BJ (cell line): ENCODE measurements at regions of chr10 and their contacts with region 1.

Region 1: GRCh38 chr10:101467286-101467770 is 113.4 kb downstream of the BTRC start:
- DNase-seq: peak; percentile 26
- H3K4me3 ChIP-seq: no peak overlapping the region
- H3K27me3 ChIP-seq: no peaks in the 10 kb centered on the region
- CTCF ChIP-seq: peak; percentile 90

Region 2: GRCh38 chr10:100229819-100230422 is 1237.4 kb before region 1 on chr10:
- CTCF ChIA-PET with region 1: no interaction called
- POLR2A ChIA-PET with region 1: no interaction called
- DNase-seq: no peak
- H3K4me3 ChIP-seq: peak overlapping the region; percentile 80
- H3K27me3 ChIP-seq: no peaks in the 10 kb centered on the region
- CTCF ChIP-seq: no peak

Region 3: DNA sequence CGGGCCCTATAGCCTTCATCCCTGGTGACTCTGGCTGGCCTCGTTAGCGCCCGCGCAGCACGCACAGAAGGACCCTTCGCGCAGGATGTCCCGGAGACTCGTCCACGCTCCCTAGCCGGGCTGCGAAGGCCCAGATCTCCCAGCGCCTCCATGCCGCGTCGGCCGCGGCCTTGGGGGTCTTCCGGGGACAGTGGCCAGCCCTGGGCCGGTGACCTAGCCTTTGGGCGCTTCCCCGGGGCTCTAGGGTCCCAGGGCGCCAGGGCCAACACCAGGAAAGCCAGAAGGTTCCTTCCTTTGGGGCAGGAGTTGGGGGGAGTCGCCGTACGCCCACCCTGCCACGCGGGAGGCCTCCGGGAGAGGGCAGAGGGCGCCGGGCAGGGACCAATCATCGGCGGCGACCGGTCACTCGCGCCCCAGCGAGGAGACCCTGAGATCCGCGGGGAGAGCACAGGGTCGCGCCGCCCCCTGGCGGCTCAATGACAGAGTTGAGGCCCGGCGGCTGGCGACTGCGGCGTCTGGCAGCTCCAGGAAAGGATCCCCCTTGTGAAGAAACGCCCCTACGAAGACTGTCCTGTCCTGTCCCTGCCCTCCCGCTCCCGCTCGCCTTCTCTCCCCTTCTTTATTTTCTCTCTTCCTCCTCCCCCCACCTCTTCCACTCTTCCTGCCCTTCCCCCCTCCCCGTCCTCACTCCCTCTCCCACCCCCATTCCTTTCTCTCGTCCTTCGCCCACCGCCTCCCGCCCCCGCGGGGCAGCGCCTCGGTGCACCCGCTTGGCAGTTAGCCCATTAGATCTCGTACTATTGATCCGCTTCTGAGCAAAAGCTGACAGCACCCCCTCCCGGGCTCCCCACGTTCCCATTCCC is 175.8 kb before region 1 on chr10:
- CTCF ChIA-PET with region 1: interaction called, 11 read pairs
- POLR2A ChIA-PET with region 1: no interaction called
- DNase-seq: no peak
- H3K4me3 ChIP-seq: peak overlapping the region; percentile 40
- H3K27me3 ChIP-seq: peaks cover 46% of the 10 kb centered on the region
- CTCF ChIP-seq: peak; percentile 69

Region 4: GRCh38 chr10:101305320-101306241 is 161.7 kb before region 1 on chr10:
- CTCF ChIA-PET with region 1: interaction called, 11 read pairs
- POLR2A ChIA-PET with region 1: no interaction called
- DNase-seq: no peak
- H3K4me3 ChIP-seq: no peak overlapping the region
- H3K27me3 ChIP-seq: peaks cover 44% of the 10 kb centered on the region
- CTCF ChIP-seq: no peak

Region 5: GRCh38 chr10:101441541-101442455 is 25.5 kb before region 1 on chr10:
- CTCF ChIA-PET with region 1: interaction called, 16 read pairs
- POLR2A ChIA-PET with region 1: no interaction called
- DNase-seq: peak; percentile 8
- H3K4me3 ChIP-seq: no peak overlapping the region
- H3K27me3 ChIP-seq: no peaks in the 10 kb centered on the region
- CTCF ChIP-seq: peak; percentile 66

Region 6: GRCh38 chr10:101453791-101454718 is 13.3 kb before region 1 on chr10:
- CTCF ChIA-PET with region 1: interaction called, 17 read pairs
- POLR2A ChIA-PET with region 1: interaction called, 10 read pairs
- DNase-seq: peak; percentile 17
- H3K4me3 ChIP-seq: no peak overlapping the region
- H3K27me3 ChIP-seq: no peaks in the 10 kb centered on the region
- CTCF ChIP-seq: no peak

Region 7: GRCh38 chr10:101485681-101486554 is 18.6 kb after region 1 on chr10:
- CTCF ChIA-PET with region 1: interaction called, 34 read pairs
- POLR2A ChIA-PET with region 1: no interaction called
- DNase-seq: no peak
- H3K4me3 ChIP-seq: no peak overlapping the region
- H3K27me3 ChIP-seq: no peaks in the 10 kb centered on the region
- CTCF ChIP-seq: no peak

Region 8: GRCh38 chr10:102112210-102112817 is 645.0 kb after region 1 on chr10:
- CTCF ChIA-PET with region 1: no interaction called
- POLR2A ChIA-PET with region 1: no interaction called
- DNase-seq: no peak
- H3K4me3 ChIP-seq: no peak overlapping the region
- H3K27me3 ChIP-seq: no peaks in the 10 kb centered on the region
- CTCF ChIP-seq: peak; percentile 23; the same call in 1 of the 2 replicates